ENCODE measurements at regions of chr17 and their contacts with region 1.

Region 1: DNA sequence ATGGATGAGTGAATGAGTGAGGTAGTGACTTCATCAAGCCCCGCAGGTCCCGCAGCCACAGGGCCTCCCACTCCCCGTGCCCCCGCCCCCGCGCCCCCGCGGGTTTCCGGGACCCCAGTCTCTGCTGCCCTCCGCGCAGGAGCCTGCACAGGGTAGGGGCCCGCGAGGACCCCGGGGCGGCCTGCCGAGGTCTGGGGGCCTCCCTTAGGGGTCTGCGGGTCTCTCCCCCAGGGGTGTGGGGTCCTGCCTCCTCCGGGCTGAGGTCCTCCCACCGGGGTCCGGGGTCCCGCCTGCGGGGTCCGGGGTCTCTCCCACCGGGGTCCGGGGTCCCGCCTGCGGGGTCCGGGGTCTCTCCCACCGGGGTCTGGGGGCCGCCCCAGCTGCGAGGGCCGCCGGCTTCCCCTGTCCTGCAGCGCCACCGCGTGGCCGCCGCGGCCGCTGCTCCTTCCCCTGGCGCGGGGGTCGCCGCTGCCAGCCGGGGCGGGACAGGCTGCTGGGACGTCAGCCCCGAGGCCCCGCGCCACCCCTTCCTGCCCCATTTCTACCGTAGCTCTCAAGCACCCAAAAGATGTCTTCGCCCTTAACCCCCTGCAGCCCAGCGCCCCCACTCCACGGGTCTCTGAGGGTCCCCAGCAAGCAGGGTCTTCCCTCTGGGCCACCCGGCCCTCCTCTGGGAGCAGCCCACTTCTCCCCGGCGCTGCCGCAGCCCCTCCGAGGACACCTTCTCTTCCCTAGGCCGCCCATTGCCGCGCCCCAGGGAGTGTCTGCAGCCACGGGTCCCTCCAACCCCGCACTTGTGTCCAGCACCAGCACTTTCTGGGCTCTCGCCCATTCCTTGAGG is 10.4 kb upstream of the CHMP6 start:
- DNase-seq: peak in 2 of 3 donors; percentile 42 to 45
- ATAC-seq: peak; percentile 56
- H3K4me3 ChIP-seq: no peak overlapping the region
- H3K4me1 ChIP-seq: peaks cover 8% of the 10 kb centered on the region
- CTCF ChIP-seq: peak; percentile 81

Region 2: GRCh38 chr17:80426681-80427326 is 554.5 kb before region 1 on chr17:
- intact Hi-C with region 1: loop called (anchors 5 to 10 kb)
- DNase-seq: peak; percentile 76 to 86 (median 77)
- ATAC-seq: peak; percentile 92
- H3K4me3 ChIP-seq: no peak overlapping the region
- H3K4me1 ChIP-seq: no peaks in the 10 kb centered on the region
- CTCF ChIP-seq: peak; percentile 97

Region 3: GRCh38 chr17:80866147-80866793 is 115.0 kb before region 1 on chr17:
- intact Hi-C with region 1: loop called in 1 of 2 experiments (anchors 10 kb)
- DNase-seq: peak; percentile 40 to 85 (median 81)
- ATAC-seq: peak; percentile 87
- H3K4me3 ChIP-seq: no peak overlapping the region
- H3K4me1 ChIP-seq: no peaks in the 10 kb centered on the region
- CTCF ChIP-seq: peak; percentile 40

Region 4: DNA sequence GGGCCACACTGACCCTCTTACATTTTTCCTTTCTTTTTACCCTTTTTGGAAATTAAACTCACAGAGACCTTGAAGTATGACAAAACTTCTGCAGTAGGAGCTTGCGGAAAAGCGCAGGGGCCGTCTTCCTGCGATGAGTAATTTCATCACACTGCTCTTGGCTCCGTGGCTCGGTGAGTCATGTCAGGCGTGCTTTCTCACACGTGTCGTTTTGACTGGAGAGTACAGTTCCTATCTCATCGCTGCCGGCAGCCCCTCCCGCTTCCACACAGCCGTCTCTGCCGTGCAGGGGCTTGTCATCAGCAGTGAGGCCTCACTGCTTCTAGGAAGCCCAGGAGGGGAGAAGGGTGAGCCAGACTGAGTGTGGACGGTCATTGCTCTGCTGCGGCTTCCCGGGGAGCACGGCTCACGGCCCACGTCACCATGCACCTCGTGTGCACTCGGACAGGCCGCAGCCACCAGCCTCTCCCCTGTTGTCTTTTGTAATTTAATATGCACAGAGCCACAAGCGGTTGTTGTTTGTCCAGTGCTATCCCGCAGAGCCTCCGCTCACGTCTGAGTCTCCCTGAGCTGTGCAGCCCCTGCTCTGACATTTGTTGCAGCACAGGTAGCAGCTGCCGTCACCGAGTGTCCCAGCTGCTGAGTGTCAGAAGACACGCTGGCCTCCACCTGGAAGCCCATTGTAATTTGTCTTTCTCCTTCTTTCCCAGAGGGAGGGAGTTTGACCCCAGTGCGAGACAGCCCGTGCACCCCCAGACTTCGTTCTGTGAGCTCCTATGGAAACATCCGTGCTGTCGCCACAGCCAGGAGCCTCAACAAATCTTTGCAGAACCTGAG is 89.0 kb before region 1 on chr17:
- intact Hi-C with region 1: no loop called
- DNase-seq: peak; percentile 55 to 86 (median 66)
- ATAC-seq: peak; percentile 80
- H3K4me3 ChIP-seq: no peak overlapping the region
- H3K4me1 ChIP-seq: no peaks in the 10 kb centered on the region
- CTCF ChIP-seq: no peak